PC-9 (cell line): ENCODE measurements at regions of chr3 and their contacts with region 1.

Region 1: GRCh38 chr3:128426128-128426921 is 40.4 kb downstream of the DNAJB8 start:
- DNase-seq: peak in 1 of 2 experiments; percentile 76
- H3K4me3 ChIP-seq: peak overlapping the region; percentile 20; the same call in 1 of the 2 replicates
- H3K27ac ChIP-seq: no peak overlapping the region
- H3K4me1 ChIP-seq: peaks cover 55% of the 10 kb centered on the region
- H3K27me3 ChIP-seq: no peaks in the 10 kb centered on the region
- CTCF ChIP-seq: peak; percentile 76

Region 2: DNA sequence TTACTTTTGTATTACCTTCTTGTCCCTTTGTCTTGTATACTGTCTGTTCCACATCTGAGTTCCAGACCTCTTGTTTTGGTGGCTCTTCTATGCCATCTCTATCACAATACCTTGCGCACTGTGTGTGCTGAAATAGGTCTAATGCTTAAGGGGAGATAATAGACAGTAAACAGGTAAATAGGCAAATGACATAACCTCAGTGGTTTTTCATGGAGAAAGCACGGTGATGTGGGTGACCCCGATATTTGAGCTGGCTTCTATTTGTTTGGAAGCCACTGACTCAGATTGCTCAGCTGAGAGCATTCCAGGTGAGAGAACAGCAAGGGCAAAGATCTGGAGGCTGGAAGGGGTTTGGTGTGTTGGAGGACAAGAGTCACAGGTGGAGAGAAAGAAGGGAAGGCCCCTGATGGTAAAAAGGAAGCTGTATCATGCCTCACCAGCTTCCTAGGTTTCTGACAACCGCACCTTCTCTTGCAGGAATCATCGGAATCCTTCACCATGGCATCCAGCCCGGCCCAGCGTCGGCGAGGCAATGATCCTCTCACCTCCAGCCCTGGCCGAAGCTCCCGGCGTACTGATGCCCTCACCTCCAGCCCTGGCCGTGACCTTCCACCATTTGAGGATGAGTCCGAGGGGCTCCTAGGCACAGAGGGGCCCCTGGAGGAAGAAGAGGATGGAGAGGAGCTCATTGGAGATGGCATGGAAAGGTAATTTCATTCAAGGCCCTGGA is 827.3 kb before region 1 on chr3:
- CTCF ChIA-PET with region 1: no interaction called
- POLR2A ChIA-PET with region 1: no interaction called
- intact Hi-C with region 1: no loop called
- DNase-seq: no peak
- H3K4me3 ChIP-seq: peak overlapping the region; percentile 70
- H3K27ac ChIP-seq: peak overlapping the region; percentile 28
- H3K4me1 ChIP-seq: peaks cover 20% of the 10 kb centered on the region; the same call in 1 of the 2 replicates
- H3K27me3 ChIP-seq: no peaks in the 10 kb centered on the region
- CTCF ChIP-seq: no peak

Region 3: GRCh38 chr3:128408693-128409623 is 17.4 kb before region 1 on chr3:
- CTCF ChIA-PET with region 1: no interaction called
- POLR2A ChIA-PET with region 1: no interaction called
- intact Hi-C with region 1: no loop called
- DNase-seq: no peak
- H3K4me3 ChIP-seq: no peak overlapping the region
- H3K27ac ChIP-seq: no peak overlapping the region
- H3K4me1 ChIP-seq: no peaks in the 10 kb centered on the region
- H3K27me3 ChIP-seq: no peaks in the 10 kb centered on the region
- CTCF ChIP-seq: 0 out of 2 replicates have a peak, but pooled peaks have one; percentile 27

Region 4: DNA sequence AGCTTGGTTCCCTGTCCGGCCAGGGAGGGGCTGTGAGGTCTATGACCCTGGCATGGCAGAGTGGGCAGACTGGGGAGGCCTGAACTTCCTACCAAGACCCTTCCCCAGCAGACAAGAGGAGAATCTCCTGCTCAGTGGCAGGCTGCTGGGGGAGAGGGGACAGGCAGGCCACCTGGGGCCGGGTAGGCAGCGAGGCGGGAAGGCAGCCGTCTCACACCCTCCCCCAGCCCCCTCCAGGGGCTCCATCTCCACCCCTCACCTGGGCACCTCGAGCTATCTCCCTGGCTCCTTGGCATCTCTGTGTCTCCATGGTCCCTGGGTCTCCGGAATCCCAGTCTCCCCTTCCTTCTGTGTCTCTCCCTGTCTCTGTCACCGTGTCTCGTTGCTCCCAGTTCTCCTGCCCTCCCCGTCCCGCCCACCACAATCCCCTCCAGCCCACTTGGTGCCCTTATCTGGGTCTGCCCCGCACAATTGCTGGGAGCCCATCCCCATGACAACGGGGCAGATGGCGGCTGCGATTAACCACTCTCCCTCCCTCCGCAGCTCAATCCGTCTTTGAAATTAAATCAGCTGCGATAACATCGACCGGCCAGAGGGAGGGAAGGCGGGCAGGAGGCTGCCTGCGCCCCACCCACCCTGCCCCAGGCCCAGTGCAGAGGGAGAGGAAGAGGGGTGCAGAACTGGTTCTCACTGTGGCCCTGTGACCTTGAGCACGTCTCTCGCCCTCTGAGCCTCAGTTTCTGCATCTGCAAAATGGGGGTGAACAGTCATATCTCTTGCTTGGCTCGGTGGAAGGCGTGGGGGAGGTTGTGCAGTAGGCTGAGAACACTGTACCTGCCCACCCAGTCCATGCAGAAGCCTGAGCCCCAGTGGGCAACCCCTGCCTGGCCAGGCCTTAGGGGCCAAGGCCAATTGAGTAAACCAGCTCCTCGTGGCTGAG is 30.7 kb after region 1 on chr3:
- CTCF ChIA-PET with region 1: no interaction called
- POLR2A ChIA-PET with region 1: no interaction called
- intact Hi-C with region 1: no loop called
- DNase-seq: no peak
- H3K4me3 ChIP-seq: no peak overlapping the region
- H3K27ac ChIP-seq: no peak overlapping the region
- H3K4me1 ChIP-seq: peaks cover 12% of the 10 kb centered on the region
- H3K27me3 ChIP-seq: no peaks in the 10 kb centered on the region
- CTCF ChIP-seq: no peak

Region 5: DNA sequence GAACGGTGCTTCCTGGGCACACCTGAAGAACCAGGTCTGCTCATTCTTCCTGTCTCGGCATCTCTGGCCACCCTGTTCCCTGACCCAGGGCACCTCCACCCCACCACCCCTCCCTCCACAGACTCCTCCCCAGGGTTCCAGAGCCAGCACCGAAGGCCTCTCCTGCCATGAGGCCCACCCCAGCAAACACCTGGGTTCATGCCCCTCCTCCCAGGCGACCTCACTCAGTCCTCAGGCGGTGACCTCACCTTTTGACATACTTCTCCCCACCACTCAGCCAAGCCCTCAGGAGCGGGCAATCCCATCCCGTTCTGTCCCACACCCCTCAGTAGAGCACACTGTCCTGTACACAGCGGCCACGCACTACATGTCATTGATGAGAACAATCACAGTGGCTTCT is 152.0 kb after region 1 on chr3:
- CTCF ChIA-PET with region 1: no interaction called
- POLR2A ChIA-PET with region 1: interaction called, 10 read pairs
- intact Hi-C with region 1: no loop called
- DNase-seq: no peak
- H3K4me3 ChIP-seq: no peak overlapping the region
- H3K27ac ChIP-seq: no peak overlapping the region
- H3K4me1 ChIP-seq: no peaks in the 10 kb centered on the region
- H3K27me3 ChIP-seq: no peaks in the 10 kb centered on the region
- CTCF ChIP-seq: no peak

Region 6: GRCh38 chr3:129026728-129027543 is 600.6 kb after region 1 on chr3:
- CTCF ChIA-PET with region 1: no interaction called
- POLR2A ChIA-PET with region 1: no interaction called
- intact Hi-C with region 1: no loop called
- DNase-seq: peak; percentile 84 to 94
- H3K4me3 ChIP-seq: peak overlapping the region; percentile 50; the same call in 1 of the 2 replicates
- H3K27ac ChIP-seq: no peak overlapping the region
- H3K4me1 ChIP-seq: 0 out of 2 replicates have a peak, but pooled peaks cover 4% of the 10 kb centered on the region
- H3K27me3 ChIP-seq: no peaks in the 10 kb centered on the region
- CTCF ChIP-seq: peak; percentile 66